Activated CD8-positive, alpha-beta T cell treated with anti-CD3 and anti-CD28 coated beads, Interleukin-2, amount 10 ng/mL, durations not matched to agents 7 days and 5 days (primary cell): ENCODE measurements at regions of chr20 and their contacts with region 1.

Region 1: GRCh38 chr20:44310664-44311639 is at the start of gene FITM2:
- DNase-seq: peak; percentile 99
- ATAC-seq: peak; percentile 92
- H3K4me3 Mint-ChIP-seq: peak within 1 kb of the TSS; percentile 88
- H3K27ac Mint-ChIP-seq: peak within 1 kb of the TSS; percentile 90
- H3K4me1 Mint-ChIP-seq: peaks cover 19% of the 10 kb centered on the region
- H3K27me3 Mint-ChIP-seq: peaks cover 6% of the 10 kb centered on the region
- total RNA-seq, gene FITM2: 2.7 to 2.9 TPM

Region 2: GRCh38 chr20:44196271-44196670 is 114.7 kb before region 1 on chr20:
- CTCF ChIA-PET with region 1: interaction called, 17 read pairs
- POLR2A ChIA-PET with region 1: no interaction called
- DNase-seq: no peak
- ATAC-seq: no peak
- H3K4me3 Mint-ChIP-seq: no peak overlapping the region
- H3K27ac Mint-ChIP-seq: no peak overlapping the region
- H3K4me1 Mint-ChIP-seq: peaks cover 44% of the 10 kb centered on the region
- H3K27me3 Mint-ChIP-seq: peaks cover 12% of the 10 kb centered on the region

Region 3: GRCh38 chr20:44210422-44211176 is 100.4 kb before region 1 on chr20 and contains the start of gene OSER1:
- CTCF ChIA-PET with region 1: interaction called, 529 read pairs
- POLR2A ChIA-PET with region 1: interaction called, 7 read pairs
- DNase-seq: peak; percentile 98
- ATAC-seq: peak; percentile 91
- H3K4me3 Mint-ChIP-seq: peak within 1 kb of the TSS; percentile 90
- H3K27ac Mint-ChIP-seq: peak within 1 kb of the TSS; percentile 88
- H3K4me1 Mint-ChIP-seq: peaks cover 54% of the 10 kb centered on the region
- H3K27me3 Mint-ChIP-seq: no peaks in the 10 kb centered on the region
- total RNA-seq, gene OSER1: 19.1 to 19.9 TPM

Region 4: DNA sequence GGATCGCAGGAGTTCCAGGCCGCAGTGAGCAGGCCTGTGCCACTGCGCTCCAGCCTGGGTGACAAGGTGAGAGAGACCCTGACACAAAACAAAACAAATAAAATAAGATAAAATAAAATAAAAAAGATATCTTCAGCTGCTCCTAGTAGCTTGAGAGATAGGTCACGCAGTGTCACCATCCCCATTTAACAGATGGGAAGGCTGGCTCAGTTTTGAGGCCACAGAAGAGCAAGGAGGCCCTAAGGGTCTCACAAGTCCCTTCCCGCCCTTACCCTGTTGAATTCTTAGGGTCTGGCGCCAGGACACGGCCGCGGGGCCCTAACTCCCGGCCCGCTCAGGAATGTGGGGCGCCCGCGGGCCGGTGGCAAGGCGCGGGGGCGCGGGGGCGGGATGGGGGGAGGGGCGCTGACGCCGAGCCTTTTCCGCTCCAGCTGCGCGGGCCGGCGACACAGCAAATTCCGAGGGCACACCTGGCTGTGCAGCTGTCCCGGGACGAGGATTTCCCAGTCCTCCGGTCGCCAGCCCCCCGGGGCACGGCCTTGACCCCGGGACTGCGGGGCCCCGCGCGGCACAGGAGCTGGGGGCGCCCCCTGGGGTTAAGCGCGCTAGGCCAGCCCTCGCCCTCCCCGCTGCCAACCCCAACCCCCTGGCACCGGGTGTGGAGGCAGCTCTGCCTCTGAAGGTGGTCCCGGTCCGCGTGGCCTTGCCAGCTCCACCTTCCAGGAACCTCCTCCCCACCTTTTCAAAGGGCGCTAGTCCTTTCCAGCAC is 15.6 kb after region 1 on chr20:
- CTCF ChIA-PET with region 1: interaction called, 35 read pairs
- POLR2A ChIA-PET with region 1: no interaction called
- DNase-seq: no peak
- ATAC-seq: peak; percentile 57
- H3K4me3 Mint-ChIP-seq: no peak overlapping the region
- H3K27ac Mint-ChIP-seq: no peak overlapping the region
- H3K4me1 Mint-ChIP-seq: no peaks in the 10 kb centered on the region
- H3K27me3 Mint-ChIP-seq: peaks cover 3% of the 10 kb centered on the region

Region 5: GRCh38 chr20:44336821-44337351 is 25.9 kb after region 1 on chr20 and contains the start of gene R3HDML:
- CTCF ChIA-PET with region 1: no interaction called
- POLR2A ChIA-PET with region 1: no interaction called
- DNase-seq: no peak
- ATAC-seq: no peak
- H3K4me3 Mint-ChIP-seq: no peak within 1 kb of the TSS
- H3K27ac Mint-ChIP-seq: no peak within 1 kb of the TSS
- H3K4me1 Mint-ChIP-seq: no peaks in the 10 kb centered on the region
- H3K27me3 Mint-ChIP-seq: peaks cover 4% of the 10 kb centered on the region
- total RNA-seq, gene R3HDML: not detected

Region 6: DNA sequence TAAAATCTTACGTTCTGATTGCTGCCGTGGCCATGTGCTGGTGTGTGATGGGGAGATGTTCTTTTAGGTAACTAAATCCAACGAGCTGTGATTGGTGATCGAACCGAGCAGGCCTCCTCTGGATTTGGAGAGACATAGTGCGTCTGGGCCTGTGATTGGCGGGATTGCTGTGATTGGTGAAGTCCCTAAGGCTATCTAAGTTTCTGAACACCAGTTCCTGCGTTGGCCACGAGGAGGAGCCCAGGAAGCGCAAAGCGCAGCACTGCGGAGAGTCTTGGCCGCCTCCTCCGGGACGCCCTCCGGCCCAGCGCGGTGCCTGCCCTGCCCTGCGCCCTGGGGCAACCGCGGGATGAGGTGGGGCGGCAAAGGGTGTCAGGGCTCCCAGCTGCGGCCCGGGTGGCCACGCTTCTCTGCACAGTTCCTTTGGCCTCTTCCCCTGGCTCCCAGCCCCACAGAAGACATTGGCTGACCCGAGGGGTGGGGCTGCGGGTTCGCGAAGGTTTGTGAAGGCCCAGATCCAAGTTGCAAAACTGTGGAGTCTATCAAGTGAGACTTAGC is 77.6 kb after region 1 on chr20:
- CTCF ChIA-PET with region 1: interaction called, 10 read pairs
- POLR2A ChIA-PET with region 1: no interaction called
- DNase-seq: peak; percentile 78
- ATAC-seq: peak; percentile 86
- H3K4me3 Mint-ChIP-seq: no peak overlapping the region
- H3K27ac Mint-ChIP-seq: no peak overlapping the region
- H3K4me1 Mint-ChIP-seq: peaks cover 6% of the 10 kb centered on the region
- H3K27me3 Mint-ChIP-seq: peaks cover 2% of the 10 kb centered on the region